ENCODE measurements at regions of chr19 and their contacts with region 1.

Region 1: DNA sequence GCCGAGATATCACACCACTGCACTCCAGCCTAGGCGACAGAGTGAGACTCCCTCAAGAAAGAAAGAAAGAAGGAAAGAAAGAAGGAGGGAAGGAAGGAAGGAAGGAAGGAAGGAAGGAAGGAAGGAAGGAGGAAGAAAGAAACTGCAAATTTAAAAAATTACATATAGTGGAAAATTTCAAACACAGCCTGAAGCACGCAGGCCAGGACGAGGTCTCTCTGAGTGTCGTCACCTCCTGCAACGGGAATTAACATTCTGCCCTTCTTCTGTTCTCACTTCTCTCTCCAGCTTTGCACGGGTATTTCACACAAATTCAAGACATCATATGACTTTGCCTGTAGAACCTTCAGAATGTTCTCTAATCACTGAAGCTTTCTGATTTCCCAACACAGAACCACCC is 108.2 kb downstream of the GNG7 start:
- DNase-seq: no peak
- ATAC-seq: no peak
- H3K4me3 ChIP-seq: no peak overlapping the region
- H3K27ac ChIP-seq: no peak overlapping the region
- H3K4me1 ChIP-seq: peaks cover 42% of the 10 kb centered on the region
- H3K27me3 ChIP-seq: no peaks in the 10 kb centered on the region
- CTCF ChIP-seq: no peak
- EP300 ChIP-seq: no peak
- POLR2A ChIP-seq: no peak
- RAD21 ChIP-seq: no peak

Region 2: DNA sequence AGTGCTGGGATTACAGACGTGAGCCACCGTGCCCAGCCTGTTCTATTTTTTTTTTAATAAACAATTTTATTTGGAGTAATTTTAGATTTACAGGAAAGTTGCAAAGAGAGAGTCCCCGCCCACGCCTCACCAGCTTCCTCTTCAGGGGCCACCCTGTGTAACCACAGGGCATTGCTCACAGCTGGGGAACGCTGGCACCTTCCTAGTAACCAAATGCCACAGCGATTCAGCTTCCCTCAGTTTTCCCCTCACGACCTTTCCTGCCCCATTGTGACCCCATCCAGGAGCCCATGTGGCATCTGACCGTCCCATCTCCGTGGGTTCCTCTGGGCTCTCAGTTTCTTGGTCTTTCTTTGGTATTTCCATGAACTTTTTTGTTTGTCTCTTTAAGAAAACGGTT is 24.3 kb after region 1 on chr19:
- CTCF ChIA-PET with region 1: no interaction called
- POLR2A ChIA-PET with region 1: no interaction called
- in situ Hi-C with region 1: no loop called
- intact Hi-C with region 1: loop called (anchors 1 kb)
- DNase-seq: no peak
- ATAC-seq: no peak
- H3K4me3 ChIP-seq: no peak overlapping the region
- H3K27ac ChIP-seq: no peak overlapping the region
- H3K4me1 ChIP-seq: peaks cover 52% of the 10 kb centered on the region
- H3K27me3 ChIP-seq: no peaks in the 10 kb centered on the region
- CTCF ChIP-seq: no peak
- EP300 ChIP-seq: no peak
- POLR2A ChIP-seq: no peak
- RAD21 ChIP-seq: no peak

Region 3: DNA sequence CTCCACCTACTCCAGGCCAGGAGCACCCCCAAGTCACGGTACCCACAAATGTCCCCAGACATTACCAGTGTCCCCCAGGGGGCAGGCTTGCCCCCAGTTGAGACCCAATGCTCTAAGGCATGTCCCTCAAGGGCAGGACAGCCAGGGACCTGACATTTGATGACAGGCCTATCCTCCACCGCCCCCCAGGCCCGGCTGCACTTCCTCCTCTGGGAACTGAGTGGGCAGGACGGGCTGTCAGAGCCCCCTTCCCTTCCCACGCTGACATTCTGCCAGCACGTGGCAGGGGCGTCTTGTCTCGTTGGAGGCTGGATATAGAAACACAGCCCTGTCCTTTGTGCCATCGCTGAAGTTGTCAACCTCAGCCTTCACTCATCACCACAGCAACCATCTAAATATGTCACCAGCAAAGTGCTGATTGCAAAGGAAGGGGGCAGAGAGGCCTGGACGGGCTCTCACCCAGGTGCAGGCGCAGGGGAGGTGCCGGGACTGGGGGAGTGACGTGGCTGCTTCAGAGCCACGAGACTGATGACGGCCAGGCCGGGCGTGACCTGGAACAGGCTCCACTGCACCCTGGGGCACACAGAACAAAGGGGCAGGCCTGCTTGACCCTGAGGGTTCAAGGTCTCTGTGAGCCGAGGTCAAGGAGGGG is 69.7 kb after region 1 on chr19:
- CTCF ChIA-PET with region 1: no interaction called
- POLR2A ChIA-PET with region 1: no interaction called
- in situ Hi-C with region 1: no loop called
- intact Hi-C with region 1: no loop called
- DNase-seq: no peak
- ATAC-seq: peak; percentile 60
- H3K4me3 ChIP-seq: peak overlapping the region in 1 of 3 experiments; percentile 2; a peak in 1 of 6 replicates
- H3K27ac ChIP-seq: no peak overlapping the region
- H3K4me1 ChIP-seq: peaks cover 13% of the 10 kb centered on the region; the same call in 1 of the 2 replicates
- H3K27me3 ChIP-seq: no peaks in the 10 kb centered on the region
- CTCF ChIP-seq: peak; percentile 51
- EP300 ChIP-seq: no peak
- POLR2A ChIP-seq: no peak
- RAD21 ChIP-seq: peak; percentile 51

Measured in HepG2 (cell line).